Dorsolateral prefrontal cortex (tissue), 120 donors: ENCODE measurements at regions of chr22 and their contacts with region 1.

Region 1: DNA sequence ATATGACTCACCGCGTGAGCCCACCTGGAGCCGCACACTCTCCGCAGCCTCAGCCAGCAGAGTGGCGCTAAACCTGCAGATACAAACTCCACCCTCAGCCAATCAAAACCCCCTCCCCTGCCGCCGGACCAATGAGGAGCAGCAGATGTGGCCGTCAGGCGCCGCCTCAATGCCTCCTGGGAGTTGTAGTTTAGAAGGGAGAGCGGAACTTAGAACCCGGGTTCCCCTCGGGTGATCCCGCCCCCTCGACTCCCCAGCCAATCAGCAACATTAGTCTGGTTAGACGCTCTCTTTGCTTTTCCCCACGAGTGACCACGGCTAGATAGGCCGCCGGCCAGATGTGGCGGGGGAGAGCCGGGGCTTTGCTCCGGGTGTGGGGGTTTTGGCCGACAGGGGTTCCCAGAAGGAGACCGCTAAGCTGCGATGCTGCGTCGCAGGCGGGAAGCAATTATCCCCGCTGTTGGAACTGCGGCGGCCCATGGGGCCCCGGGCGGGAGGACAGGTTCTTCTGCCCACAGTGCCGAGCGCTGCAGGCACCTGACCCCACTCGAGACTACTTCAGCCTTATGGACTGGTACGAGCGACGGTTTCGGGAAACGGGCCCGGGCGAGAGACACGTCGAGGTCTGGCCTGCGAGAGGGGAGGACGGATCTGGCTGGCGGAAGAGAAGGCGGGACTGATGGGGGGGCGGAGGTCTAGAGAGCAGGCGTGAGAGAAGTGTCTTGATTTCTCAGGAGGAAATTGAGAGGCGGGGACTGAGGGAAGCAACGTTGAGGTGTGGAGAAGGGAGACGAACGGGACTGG is at the starts of genes CHEK2 and HSCB:
- DNase-seq: peak; percentile 95 to 99 (median 98)
- H3K4me3 ChIP-seq: peak within 1 kb of the TSS; percentile 71 to 100 (median 97)
- H3K27ac ChIP-seq: peak within 1 kb of the TSS; percentile 49 to 99 (median 94)
- H3K27me3 ChIP-seq: no peaks in the 10 kb centered on the region
- CTCF ChIP-seq: peak in 49 of 56 donors; percentile 10 to 69 (median 45)
- total RNA-seq, gene CHEK2: 0.83 to 9.6 (median 4.0) TPM
- total RNA-seq, gene HSCB: 5.9 to 17.8 (median 10.3) TPM

Region 2: DNA sequence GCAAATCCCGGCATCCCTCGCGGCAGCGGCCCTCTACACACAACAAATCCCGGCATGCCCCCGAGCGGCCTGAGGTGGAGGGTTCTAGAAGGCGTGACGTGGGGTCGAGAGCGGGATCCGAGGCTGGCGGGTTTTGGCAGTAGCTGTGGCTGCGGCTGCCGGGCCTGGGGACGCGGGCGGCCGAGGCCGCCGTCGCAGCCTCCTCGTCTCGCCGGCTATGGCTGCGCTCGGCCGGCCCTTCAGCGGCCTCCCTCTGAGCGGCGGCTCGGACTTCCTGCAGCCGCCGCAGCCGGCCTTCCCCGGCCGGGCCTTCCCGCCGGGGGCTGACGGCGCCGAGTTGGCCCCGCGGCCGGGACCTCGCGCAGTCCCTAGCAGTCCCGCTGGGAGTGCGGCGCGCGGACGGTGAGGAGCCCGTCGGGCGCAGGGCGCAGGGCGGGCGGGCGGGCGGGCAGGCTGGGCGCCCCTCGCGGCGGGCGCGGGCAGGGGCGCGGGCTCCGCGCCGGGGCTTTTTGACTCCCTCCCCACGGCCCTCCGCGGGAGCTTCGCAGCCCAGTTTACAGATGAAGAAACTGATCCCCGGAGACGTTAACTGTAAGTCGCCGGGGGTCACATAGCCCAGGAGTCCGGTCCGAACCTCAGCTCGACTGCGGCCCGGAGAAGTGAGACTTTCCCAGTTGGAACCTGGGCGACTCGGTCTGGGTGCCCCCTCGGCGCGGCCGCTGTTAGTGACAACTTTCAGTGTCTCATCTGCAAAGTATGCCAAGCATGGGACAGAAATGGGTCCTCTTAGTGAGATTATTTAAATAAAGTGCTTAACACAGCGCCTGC is 30.9 kb after region 1 on chr22 and contains the start of gene CCDC117:
- intact Hi-C with region 1: loop called (anchors 1 kb)
- DNase-seq: peak; percentile 96 to 97 (median 96)
- H3K4me3 ChIP-seq: peak within 1 kb of the TSS; percentile 54 to 95 (median 82)
- H3K27ac ChIP-seq: peak within 1 kb of the TSS; percentile 84 to 100 (median 98)
- H3K27me3 ChIP-seq: no peaks in the 10 kb centered on the region
- CTCF ChIP-seq: peak in 23 of 56 donors; percentile 4 to 51 (median 23)
- total RNA-seq, gene CCDC117: 10.6 to 35.3 (median 16.8) TPM

Region 3: GRCh38 chr22:28882878-28883656 is 141.1 kb after region 1 on chr22 and contains the start of gene ZNRF3:
- intact Hi-C with region 1: loop called in 1 of 2 experiments (anchors 2 kb)
- DNase-seq: peak; percentile 90 to 98 (median 93)
- H3K4me3 ChIP-seq: peak within 1 kb of the TSS; percentile 57 to 83 (median 72)
- H3K27ac ChIP-seq: peak within 1 kb of the TSS in 47 of 59 donors; percentile 2 to 86 (median 62)
- H3K27me3 ChIP-seq: no peaks in the 10 kb centered on the region
- CTCF ChIP-seq: peak in 9 of 56 donors; percentile 8 to 28 (median 17)
- total RNA-seq, gene ZNRF3: 13.3 to 65.5 (median 24.6) TPM

Region 4: DNA sequence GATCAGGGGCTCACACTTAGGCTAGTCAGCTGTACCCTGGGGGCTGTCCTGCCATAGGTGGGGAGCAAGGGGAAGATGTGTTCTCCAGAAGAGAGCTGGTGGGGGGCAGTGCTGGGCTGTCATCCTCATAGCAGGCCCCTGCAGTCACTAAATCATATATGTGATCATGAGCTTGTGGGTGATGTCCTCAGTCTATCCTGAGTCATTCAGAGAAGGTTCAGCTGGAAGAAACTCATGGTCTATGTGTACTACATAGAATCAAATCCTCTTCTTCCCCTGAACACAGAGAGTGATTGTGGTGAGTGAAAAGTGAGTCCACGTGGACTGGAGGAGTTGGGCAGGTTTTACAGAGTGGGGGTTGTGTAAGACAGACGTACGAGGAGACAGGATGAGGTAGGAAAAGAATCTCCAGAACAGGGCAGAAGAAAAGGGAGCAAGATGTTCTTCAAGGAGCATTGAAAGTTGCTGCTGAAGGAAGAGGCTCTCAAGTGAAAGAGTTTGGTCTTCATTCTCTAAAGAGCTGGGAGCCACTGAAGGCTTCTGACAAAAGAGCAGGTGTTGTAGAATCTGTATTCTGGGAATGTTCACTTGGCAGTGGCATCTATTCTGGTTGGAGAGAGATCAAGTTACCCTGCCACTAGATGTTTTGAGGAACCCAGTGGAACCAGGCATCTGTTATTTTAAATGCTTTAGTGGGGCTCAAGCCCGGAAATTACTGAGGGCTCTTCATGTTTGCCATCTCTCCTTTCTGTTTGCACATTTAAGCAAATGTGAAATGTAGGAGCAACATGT is 250.8 kb after region 1 on chr22:
- intact Hi-C with region 1: no loop called
- DNase-seq: no peak
- H3K4me3 ChIP-seq: no peak overlapping the region
- H3K27ac ChIP-seq: peak overlapping the region in 51 of 59 donors; percentile 3 to 87 (median 60)
- H3K27me3 ChIP-seq: no peaks in the 10 kb centered on the region
- CTCF ChIP-seq: no peak